Colonic mucosa (tissue), 4 donors: ENCODE measurements at regions of chr4 and their contacts with region 1.

Region 1: GRCh38 chr4:158778156-158778711 is 9.4 kb downstream of the FNIP2 start:
- DNase-seq: no peak
- H3K4me3 ChIP-seq: no peak overlapping the region
- H3K27ac ChIP-seq: peak overlapping the region; percentile 73
- H3K4me1 ChIP-seq: peaks cover 29% of the 10 kb centered on the region
- H3K27me3 ChIP-seq: no peaks in the 10 kb centered on the region
- CTCF ChIP-seq: no peak

Region 2: DNA sequence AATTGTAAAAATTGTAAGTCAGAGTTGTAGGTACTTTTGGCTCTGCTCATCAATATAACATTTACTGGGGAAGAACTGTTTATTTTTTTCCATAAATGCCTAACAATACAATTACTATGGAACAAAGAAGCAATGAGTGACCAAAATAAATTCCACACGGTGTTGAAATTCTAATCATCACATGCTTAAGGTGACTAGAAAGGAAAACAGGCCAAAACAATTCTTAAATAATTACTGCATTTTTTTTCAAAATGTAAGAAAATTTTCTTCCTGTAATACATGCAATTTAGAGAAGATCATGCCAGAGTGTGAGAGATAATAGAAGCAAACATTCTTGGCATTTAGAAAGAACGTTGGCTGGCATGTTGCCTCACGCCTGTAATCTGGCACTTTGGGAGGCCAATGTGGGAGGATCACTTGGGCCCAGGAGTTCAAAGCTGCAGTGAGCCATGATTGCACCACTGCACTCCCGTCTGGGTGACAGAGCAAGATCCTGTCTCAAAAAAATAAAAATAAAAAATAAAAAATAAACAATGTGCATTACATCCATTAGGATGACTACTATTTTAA is 129.0 kb before region 1 on chr4:
- intact Hi-C with region 1: no loop called
- DNase-seq: no peak
- H3K4me3 ChIP-seq: no peak overlapping the region
- H3K27ac ChIP-seq: no peak overlapping the region
- H3K4me1 ChIP-seq: no peaks in the 10 kb centered on the region
- H3K27me3 ChIP-seq: no peaks in the 10 kb centered on the region
- CTCF ChIP-seq: no peak

Region 3: GRCh38 chr4:158821228-158821971 is 43.2 kb after region 1 on chr4:
- intact Hi-C with region 1: loop called (anchors 5 kb)
- DNase-seq: no peak
- H3K4me3 ChIP-seq: no peak overlapping the region
- H3K27ac ChIP-seq: peak overlapping the region; percentile 65
- H3K4me1 ChIP-seq: peaks cover 25% of the 10 kb centered on the region
- H3K27me3 ChIP-seq: no peaks in the 10 kb centered on the region
- CTCF ChIP-seq: no peak